ENCODE measurements at regions of chr10 and their contacts with region 1.

Region 1: GRCh38 chr10:69124563-69125268 is 738 bp downstream of the VPS26A start:
- DNase-seq: peak; percentile 53 to 74 (median 61)
- H3K4me3 ChIP-seq: peak overlapping the region; percentile 59 to 85 (median 70)
- H3K27ac ChIP-seq: peak overlapping the region; percentile 97 to 99 (median 98)
- H3K4me1 ChIP-seq: peaks cover 4 to 35% of the 10 kb centered on the region in 2 donors
- H3K27me3 ChIP-seq: no peaks in the 10 kb centered on the region
- CTCF ChIP-seq: no peak
- POLR2A ChIP-seq: peak in 1 of 2 donors; percentile 38

Region 2: DNA sequence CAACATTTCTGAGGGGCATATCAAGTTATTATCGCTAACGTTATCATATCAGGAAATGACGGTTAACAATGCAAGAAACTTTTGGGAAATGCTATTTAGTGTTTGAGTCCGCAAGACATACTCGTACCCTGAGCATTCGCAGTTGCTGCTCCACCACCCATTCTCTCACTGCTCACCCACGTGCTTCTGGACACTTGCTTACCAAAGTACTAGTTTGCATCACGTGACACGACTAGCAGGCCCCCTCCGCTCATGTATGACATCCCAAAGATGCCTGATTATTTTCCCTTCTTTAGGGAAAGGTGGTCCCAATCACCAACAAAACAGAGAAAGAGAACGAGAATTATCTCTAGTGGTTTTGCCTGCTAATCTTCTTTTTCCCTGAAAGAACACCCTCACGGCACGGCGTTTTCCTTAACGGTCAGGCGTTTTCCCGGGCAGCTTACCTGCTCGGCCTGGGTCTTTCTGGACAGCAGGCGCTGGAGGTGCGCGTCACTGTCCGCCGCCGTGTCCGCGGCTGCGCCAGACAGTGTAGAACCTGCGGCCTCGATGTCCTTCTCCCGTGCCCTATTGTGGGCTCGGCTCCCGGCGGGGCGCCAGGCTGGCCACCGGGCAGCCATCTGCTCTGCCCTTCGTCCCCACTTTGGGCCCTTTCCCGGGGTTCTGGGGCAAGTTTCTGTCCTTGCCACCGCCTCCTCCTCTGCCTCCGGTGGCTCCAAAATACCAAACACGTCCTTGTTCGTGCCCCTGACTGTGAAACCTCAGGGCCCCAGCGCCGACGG is 55.2 kb after region 1 on chr10 and contains the start of gene SUPV3L1:
- intact Hi-C with region 1: loop called in 1 of 2 experiments (anchors 5 kb)
- DNase-seq: peak; percentile 91 to 98 (median 96)
- H3K4me3 ChIP-seq: peak within 1 kb of the TSS; percentile 17 to 99 (median 84)
- H3K27ac ChIP-seq: peak within 1 kb of the TSS; percentile 69 to 98 (median 92)
- H3K4me1 ChIP-seq: peaks cover 0 to 25% of the 10 kb centered on the region in 2 donors
- H3K27me3 ChIP-seq: no peaks in the 10 kb centered on the region
- CTCF ChIP-seq: no peak
- POLR2A ChIP-seq: peak; percentile 68 to 87
- total RNA-seq, gene SUPV3L1: 24.4 to 53.1 (median 34.1) TPM